Activated CD8-positive, alpha-beta T cell treated with anti-CD3 and anti-CD28 coated beads for 36 hours (primary cell): ENCODE measurements at regions of chr20 and their contacts with region 1.

Region 1: DNA sequence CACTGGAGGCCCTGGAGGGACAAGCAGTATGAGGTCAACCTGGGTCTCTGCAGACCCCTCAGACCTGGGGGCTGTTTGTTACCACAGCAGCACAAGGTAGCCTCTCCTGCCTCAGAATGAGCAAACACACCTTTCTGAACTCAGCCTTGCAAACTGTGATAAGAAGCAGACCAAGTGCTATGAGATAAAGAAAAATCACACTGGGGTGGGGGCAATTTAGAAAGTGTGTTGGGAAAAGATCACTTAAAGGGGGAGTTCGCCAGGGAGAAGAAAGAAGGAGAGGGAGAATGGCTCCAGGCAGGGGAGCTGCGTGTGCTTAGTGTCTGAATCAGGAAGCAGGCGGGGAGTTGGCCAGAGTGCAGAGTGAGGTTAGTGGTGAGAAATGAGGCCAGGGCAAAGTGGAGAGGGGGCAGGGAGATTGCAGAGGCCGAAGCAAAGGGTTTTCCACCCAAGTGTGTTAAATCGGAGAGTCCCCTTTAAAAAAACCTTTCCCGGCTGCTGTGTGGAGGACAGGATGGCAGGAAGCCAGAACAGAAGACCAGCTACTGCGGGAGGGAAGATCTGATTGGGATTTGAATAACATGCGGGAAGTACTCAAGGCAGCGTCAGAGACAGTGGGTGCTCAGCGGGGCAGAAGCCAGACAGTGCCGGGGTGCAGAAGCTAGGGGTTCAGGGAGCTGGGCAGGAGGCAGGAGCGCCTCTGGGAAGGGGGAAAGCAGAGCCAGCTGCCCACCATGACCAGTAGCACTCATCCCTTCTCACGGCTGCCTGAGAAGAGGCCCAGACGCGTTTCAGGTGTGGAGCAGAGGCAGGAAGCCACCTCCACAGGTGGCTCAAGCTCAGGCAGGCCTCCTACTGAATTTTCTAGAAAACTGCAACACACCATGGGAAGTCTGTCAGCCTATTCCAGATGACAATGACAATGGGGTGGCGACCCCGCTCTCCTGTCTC is 9.0 kb downstream of the ADA start:
- DNase-seq: peak; percentile 52
- ATAC-seq: peak; percentile 21
- H3K4me3 Mint-ChIP-seq: peak overlapping the region; percentile 55
- H3K27ac Mint-ChIP-seq: peak overlapping the region; percentile 96
- H3K4me1 Mint-ChIP-seq: peaks cover 60% of the 10 kb centered on the region
- H3K27me3 Mint-ChIP-seq: no peaks in the 10 kb centered on the region
- CTCF ChIP-seq: no peak

Region 2: GRCh38 chr20:44582311-44583025 is 60.0 kb before region 1 on chr20 and contains the start of gene PKIG:
- CTCF ChIA-PET with region 1: no interaction called
- POLR2A ChIA-PET with region 1: no interaction called
- intact Hi-C with region 1: no loop called
- DNase-seq: no peak
- ATAC-seq: no peak
- H3K4me3 Mint-ChIP-seq: no peak within 1 kb of the TSS
- H3K27ac Mint-ChIP-seq: no peak within 1 kb of the TSS
- H3K4me1 Mint-ChIP-seq: peaks cover 6% of the 10 kb centered on the region
- H3K27me3 Mint-ChIP-seq: no peaks in the 10 kb centered on the region
- CTCF ChIP-seq: no peak
- total RNA-seq, gene PKIG: 4.8 TPM

Region 3: GRCh38 chr20:44615876-44616603 is 26.4 kb before region 1 on chr20:
- CTCF ChIA-PET with region 1: interaction called, 11 read pairs
- POLR2A ChIA-PET with region 1: interaction called, 5 read pairs
- intact Hi-C with region 1: no loop called
- DNase-seq: peak; percentile 12
- ATAC-seq: no peak
- H3K4me3 Mint-ChIP-seq: no peak overlapping the region
- H3K27ac Mint-ChIP-seq: peak overlapping the region; percentile 81
- H3K4me1 Mint-ChIP-seq: peaks cover 60% of the 10 kb centered on the region
- H3K27me3 Mint-ChIP-seq: no peaks in the 10 kb centered on the region
- CTCF ChIP-seq: no peak